Activated CD8-positive, alpha-beta T cell treated with anti-CD3 and anti-CD28 coated beads, Interleukin-2, amount 10 ng/mL, durations not matched to agents 7 days and 5 days (primary cell): ENCODE measurements at regions of chr6 and their contacts with region 1.

Region 1: GRCh38 chr6:28580475-28580874 is 54.8 kb downstream of the GPX5 start:
- DNase-seq: no peak
- ATAC-seq: no peak
- H3K4me3 Mint-ChIP-seq: no peak overlapping the region
- H3K27ac Mint-ChIP-seq: no peak overlapping the region
- H3K4me1 Mint-ChIP-seq: no peaks in the 10 kb centered on the region
- H3K27me3 Mint-ChIP-seq: peaks cover 15% of the 10 kb centered on the region

Region 2: DNA sequence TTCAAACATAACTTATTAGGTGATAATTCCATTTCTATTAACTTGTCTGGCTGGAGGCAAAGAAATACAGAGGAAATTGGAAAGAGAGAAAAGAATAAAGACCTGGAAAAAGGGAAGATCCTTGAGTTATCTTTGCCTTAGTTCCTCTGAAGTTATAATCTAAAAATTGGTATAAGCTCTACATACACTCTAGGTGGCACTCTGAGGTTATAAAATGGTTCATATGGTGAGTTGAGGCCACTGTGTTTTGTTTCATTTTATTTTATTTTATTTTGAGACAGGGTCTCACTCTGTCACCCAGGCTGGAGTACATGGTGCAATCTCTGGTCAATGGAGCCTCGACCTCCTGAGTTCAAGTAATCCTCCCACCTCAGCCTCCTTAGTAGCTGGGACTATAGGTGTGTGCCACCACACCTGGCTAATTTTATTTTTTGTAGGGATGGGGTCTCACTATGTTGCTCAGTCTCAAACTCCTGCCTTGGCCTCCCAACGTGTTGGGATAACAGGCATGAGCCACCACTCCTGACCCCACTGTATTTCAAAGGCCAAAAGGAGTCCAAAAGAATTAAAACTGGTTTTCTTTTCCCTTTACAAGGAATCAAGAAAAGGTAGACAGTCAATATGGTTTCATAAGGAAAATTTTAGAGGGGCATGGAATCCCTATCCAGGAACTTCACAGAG is 84.2 kb before region 1 on chr6:
- CTCF ChIA-PET with region 1: interaction called, 25 read pairs
- POLR2A ChIA-PET with region 1: no interaction called
- DNase-seq: no peak
- ATAC-seq: no peak
- H3K4me3 Mint-ChIP-seq: no peak overlapping the region
- H3K27ac Mint-ChIP-seq: no peak overlapping the region
- H3K4me1 Mint-ChIP-seq: peaks cover 5% of the 10 kb centered on the region
- H3K27me3 Mint-ChIP-seq: peaks cover 37% of the 10 kb centered on the region

Region 3: GRCh38 chr6:28506807-28507475 is 73.5 kb before region 1 on chr6:
- CTCF ChIA-PET with region 1: no interaction called
- POLR2A ChIA-PET with region 1: no interaction called
- DNase-seq: no peak
- ATAC-seq: peak; percentile 77
- H3K4me3 Mint-ChIP-seq: no peak overlapping the region
- H3K27ac Mint-ChIP-seq: no peak overlapping the region
- H3K4me1 Mint-ChIP-seq: peaks cover 17% of the 10 kb centered on the region
- H3K27me3 Mint-ChIP-seq: peaks cover 21% of the 10 kb centered on the region

Region 4: GRCh38 chr6:28673800-28674671 is 93.6 kb after region 1 on chr6:
- CTCF ChIA-PET with region 1: no interaction called
- POLR2A ChIA-PET with region 1: no interaction called
- DNase-seq: peak; percentile 55
- ATAC-seq: peak; percentile 39
- H3K4me3 Mint-ChIP-seq: peak overlapping the region; percentile 69
- H3K27ac Mint-ChIP-seq: no peak overlapping the region
- H3K4me1 Mint-ChIP-seq: peaks cover 14% of the 10 kb centered on the region
- H3K27me3 Mint-ChIP-seq: peaks cover 41% of the 10 kb centered on the region